IMR-90 (cell line): ENCODE measurements at regions of chr4 and their contacts with region 1.

Region 1: GRCh38 chr4:15479089-15479912 is 9.6 kb downstream of the CC2D2A start:
- DNase-seq: peak; percentile 89
- ATAC-seq: peak; percentile 87
- H3K4me3 ChIP-seq: peak overlapping the region; percentile 48
- H3K27ac ChIP-seq: peak overlapping the region; percentile 81
- H3K4me1 ChIP-seq: peaks cover 9% of the 10 kb centered on the region
- H3K27me3 ChIP-seq: no peaks in the 10 kb centered on the region
- CTCF ChIP-seq: peak; percentile 88
- POLR2A ChIP-seq: peak; percentile 48
- RAD21 ChIP-seq: peak; percentile 92

Region 2: DNA sequence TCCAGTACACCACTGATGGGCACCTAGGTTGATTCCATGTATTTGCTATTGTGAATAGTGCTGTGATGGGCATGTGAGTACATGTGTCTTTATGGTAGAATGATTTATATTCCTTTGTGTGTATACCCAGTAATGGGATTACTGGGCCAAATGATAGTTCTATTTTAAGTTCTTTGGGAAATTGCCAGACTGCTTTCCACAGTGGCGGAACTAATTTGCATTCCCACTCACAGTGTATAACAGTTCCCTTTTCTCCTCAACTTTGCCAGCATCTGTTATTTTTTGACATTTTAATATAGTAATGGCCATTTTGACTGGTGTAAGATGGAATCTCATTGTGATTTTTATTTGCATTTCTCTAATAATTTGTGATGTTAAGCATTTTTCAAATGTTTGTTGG is 16.3 kb after region 1 on chr4:
- CTCF ChIA-PET with region 1: no interaction called
- POLR2A ChIA-PET with region 1: no interaction called
- dilution Hi-C with region 1: no loop called
- in situ Hi-C with region 1: no loop called
- intact Hi-C with region 1: no loop called
- DNase-seq: no peak
- ATAC-seq: no peak
- H3K4me3 ChIP-seq: no peak overlapping the region
- H3K27ac ChIP-seq: no peak overlapping the region
- H3K4me1 ChIP-seq: peaks cover 2% of the 10 kb centered on the region; the same call in 1 of the 2 replicates
- H3K27me3 ChIP-seq: no peaks in the 10 kb centered on the region
- CTCF ChIP-seq: no peak
- POLR2A ChIP-seq: no peak
- RAD21 ChIP-seq: no peak

Region 3: DNA sequence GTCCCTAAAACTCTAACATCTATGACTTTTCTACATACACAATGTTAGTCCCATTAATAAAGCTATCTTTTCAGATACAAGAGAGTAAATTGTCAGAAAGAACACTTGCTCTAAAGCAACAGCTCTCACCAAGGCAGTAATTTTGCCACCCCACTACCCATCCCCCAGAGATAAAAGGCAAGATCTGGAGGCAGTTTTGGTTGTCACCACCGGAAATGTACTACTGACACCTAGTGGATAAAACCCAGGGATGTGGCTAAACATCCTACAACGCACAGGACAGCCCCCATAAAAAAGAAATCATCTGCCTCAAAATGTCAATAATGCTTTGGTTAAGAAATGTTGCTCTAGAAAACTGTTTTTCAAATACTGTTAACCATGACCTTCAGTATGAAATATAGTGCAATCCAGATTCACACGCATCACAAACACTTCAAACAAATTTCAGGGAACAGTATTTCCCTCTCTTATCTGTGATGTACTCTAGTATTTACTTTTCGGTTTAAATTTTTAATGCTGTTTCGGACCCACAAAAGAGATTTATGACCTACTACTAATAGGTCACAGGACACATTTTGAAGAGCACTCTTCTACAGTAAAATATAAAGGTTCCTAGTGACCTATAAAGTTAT is 170.7 kb after region 1 on chr4:
- CTCF ChIA-PET with region 1: interaction called, 4 read pairs
- POLR2A ChIA-PET with region 1: no interaction called
- dilution Hi-C with region 1: no loop called
- in situ Hi-C with region 1: no loop called
- intact Hi-C with region 1: loop called (anchors 1 kb)
- DNase-seq: peak; percentile 63
- ATAC-seq: peak; percentile 25; the same call in 1 of the 2 replicates
- H3K4me3 ChIP-seq: no peak overlapping the region
- H3K27ac ChIP-seq: no peak overlapping the region
- H3K4me1 ChIP-seq: no peaks in the 10 kb centered on the region; the same call in 1 of the 2 replicates
- H3K27me3 ChIP-seq: no peaks in the 10 kb centered on the region
- CTCF ChIP-seq: peak; percentile 75
- POLR2A ChIP-seq: no peak
- RAD21 ChIP-seq: peak; percentile 76

Region 4: DNA sequence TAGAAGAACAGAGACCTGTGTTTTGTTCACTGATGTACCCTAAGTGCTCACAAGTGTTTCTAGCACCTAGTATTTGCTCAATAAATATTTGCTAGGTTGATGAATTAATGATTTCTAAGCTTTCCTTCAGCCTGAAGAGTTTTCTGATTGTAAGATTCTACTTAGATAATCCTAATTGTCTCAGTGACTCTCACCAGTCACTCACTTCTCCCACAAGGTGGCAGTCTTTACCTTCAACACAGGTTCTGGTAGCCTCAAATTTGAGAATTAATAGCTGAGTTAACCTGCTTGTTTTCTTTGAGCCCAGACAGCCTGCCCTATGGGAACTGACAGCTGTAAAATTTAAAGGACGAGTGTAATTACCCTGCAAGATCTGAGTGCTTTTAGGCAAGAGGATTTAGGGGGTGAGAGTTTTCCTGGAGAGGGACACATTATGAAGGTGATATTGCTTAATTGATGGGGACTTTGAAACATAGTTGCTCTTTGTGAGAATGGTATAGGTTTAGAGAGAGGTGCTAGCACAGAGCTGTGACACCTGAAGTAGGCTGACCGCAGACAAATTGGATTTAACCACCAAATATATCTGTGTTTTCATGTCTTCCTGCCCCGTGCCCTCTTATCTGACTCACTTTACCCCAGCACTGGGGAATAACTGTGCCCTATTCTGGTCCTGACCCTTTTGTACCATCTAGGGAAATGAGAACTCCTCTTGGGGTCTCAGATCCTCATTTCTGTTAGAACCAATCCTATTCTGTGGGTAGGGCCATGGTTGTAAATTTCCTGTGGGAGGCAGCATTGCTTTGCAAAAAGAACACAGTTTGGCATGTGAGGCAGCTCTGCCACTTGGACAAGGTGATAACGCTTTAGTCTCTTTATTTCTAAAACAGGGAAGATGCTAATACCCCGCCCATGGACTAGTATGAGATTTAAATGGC is 326.5 kb after region 1 on chr4:
- CTCF ChIA-PET with region 1: interaction called, 5 read pairs
- POLR2A ChIA-PET with region 1: no interaction called
- dilution Hi-C with region 1: no loop called
- in situ Hi-C with region 1: loop called (anchors 10 kb)
- intact Hi-C with region 1: loop called (anchors 1 kb)
- DNase-seq: peak; percentile 63
- ATAC-seq: peak; percentile 84
- H3K4me3 ChIP-seq: no peak overlapping the region
- H3K27ac ChIP-seq: no peak overlapping the region
- H3K4me1 ChIP-seq: no peaks in the 10 kb centered on the region
- H3K27me3 ChIP-seq: peaks cover 27% of the 10 kb centered on the region
- CTCF ChIP-seq: peak; percentile 83
- POLR2A ChIP-seq: no peak
- RAD21 ChIP-seq: peak; percentile 84

Region 5: DNA sequence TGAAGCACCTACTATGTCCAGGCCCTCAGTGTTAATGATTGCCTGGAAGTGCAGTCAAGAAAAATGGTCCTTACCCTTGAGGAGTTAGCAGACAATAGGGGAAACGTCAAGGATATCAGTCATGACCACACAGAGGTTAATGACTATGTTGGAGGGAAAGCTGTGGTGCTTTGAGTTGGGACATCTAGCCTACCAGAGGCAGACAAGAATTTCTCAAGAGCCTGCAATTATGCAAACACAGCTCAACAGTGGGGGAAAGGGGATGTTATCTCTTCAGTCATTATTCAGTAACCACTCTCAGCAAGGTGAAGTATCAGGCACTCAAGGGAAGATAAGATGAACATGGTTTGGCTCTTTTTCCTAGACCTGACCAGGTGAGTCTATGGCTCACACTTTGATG is 466.2 kb after region 1 on chr4:
- CTCF ChIA-PET with region 1: interaction called, 3 read pairs
- POLR2A ChIA-PET with region 1: no interaction called
- dilution Hi-C with region 1: no loop called
- in situ Hi-C with region 1: loop called (anchors 10 kb)
- intact Hi-C with region 1: no loop called
- DNase-seq: no peak
- ATAC-seq: no peak
- H3K4me3 ChIP-seq: no peak overlapping the region
- H3K27ac ChIP-seq: no peak overlapping the region
- H3K4me1 ChIP-seq: no peaks in the 10 kb centered on the region
- H3K27me3 ChIP-seq: peaks cover 14% of the 10 kb centered on the region
- CTCF ChIP-seq: no peak
- POLR2A ChIP-seq: no peak
- RAD21 ChIP-seq: no peak

Region 6: GRCh38 chr4:16001484-16001858 is 522.2 kb after region 1 on chr4:
- CTCF ChIA-PET with region 1: no interaction called
- POLR2A ChIA-PET with region 1: no interaction called
- dilution Hi-C with region 1: no loop called
- in situ Hi-C with region 1: no loop called
- intact Hi-C with region 1: loop called (anchors 1 kb)
- DNase-seq: peak; percentile 72
- ATAC-seq: peak; percentile 99
- H3K4me3 ChIP-seq: no peak overlapping the region
- H3K27ac ChIP-seq: no peak overlapping the region
- H3K4me1 ChIP-seq: no peaks in the 10 kb centered on the region
- H3K27me3 ChIP-seq: peaks cover 17% of the 10 kb centered on the region
- CTCF ChIP-seq: peak; percentile 91
- POLR2A ChIP-seq: no peak
- RAD21 ChIP-seq: peak; percentile 95

Region 7: GRCh38 chr4:16225863-16226815 is 746.8 kb after region 1 on chr4 and contains the start of gene TAPT1:
- CTCF ChIA-PET with region 1: no interaction called
- POLR2A ChIA-PET with region 1: no interaction called
- dilution Hi-C with region 1: no loop called
- in situ Hi-C with region 1: loop called (anchors 25 kb)
- intact Hi-C with region 1: loop called (anchors 10 kb)
- DNase-seq: peak; percentile 30
- ATAC-seq: peak; percentile 91
- H3K4me3 ChIP-seq: peak within 1 kb of the TSS; percentile 96
- H3K27ac ChIP-seq: peak within 1 kb of the TSS; percentile 69
- H3K4me1 ChIP-seq: no peaks in the 10 kb centered on the region; the same call in 1 of the 2 replicates
- H3K27me3 ChIP-seq: no peaks in the 10 kb centered on the region
- CTCF ChIP-seq: no peak
- POLR2A ChIP-seq: 0 out of 2 replicates have a peak, but pooled peaks have one; percentile 43
- RAD21 ChIP-seq: no peak
- total RNA-seq, gene TAPT1: 12.2 and 12.8 TPM in 2 replicates